ENCODE measurements at regions of chr11 and their contacts with region 1.

Region 1: GRCh38 chr11:96342961-96343711 is at the start of gene MAML2:
- DNase-seq: peak; percentile 94
- H3K4me3 ChIP-seq: peak within 1 kb of the TSS; percentile 84 to 90
- H3K27ac ChIP-seq: peak within 1 kb of the TSS; percentile 82 to 91
- H3K4me1 ChIP-seq: peaks cover 15 to 28% of the 10 kb centered on the region in 2 experiments; a peak in 2 of 4 replicates
- H3K27me3 ChIP-seq: no peaks in the 10 kb centered on the region
- CTCF ChIP-seq: peak; percentile 73
- EP300 ChIP-seq: no peak
- RAD21 ChIP-seq: peak; percentile 91
- polyA plus RNA-seq, gene MAML2: 20.1 and 24.5 TPM in 2 replicates

Region 2: GRCh38 chr11:95835768-95836488 is 507.2 kb before region 1 on chr11:
- CTCF ChIA-PET with region 1: interaction called, 28 read pairs
- POLR2A ChIA-PET with region 1: no interaction called
- DNase-seq: peak; percentile 55
- H3K4me3 ChIP-seq: no peak overlapping the region
- H3K27ac ChIP-seq: peak overlapping the region; percentile 43 to 61
- H3K4me1 ChIP-seq: peaks cover 2 to 4% of the 10 kb centered on the region in 2 experiments; a peak in 2 of 4 replicates
- H3K27me3 ChIP-seq: no peaks in the 10 kb centered on the region
- CTCF ChIP-seq: peak; percentile 95
- EP300 ChIP-seq: no peak
- RAD21 ChIP-seq: peak; percentile 89

Region 3: DNA sequence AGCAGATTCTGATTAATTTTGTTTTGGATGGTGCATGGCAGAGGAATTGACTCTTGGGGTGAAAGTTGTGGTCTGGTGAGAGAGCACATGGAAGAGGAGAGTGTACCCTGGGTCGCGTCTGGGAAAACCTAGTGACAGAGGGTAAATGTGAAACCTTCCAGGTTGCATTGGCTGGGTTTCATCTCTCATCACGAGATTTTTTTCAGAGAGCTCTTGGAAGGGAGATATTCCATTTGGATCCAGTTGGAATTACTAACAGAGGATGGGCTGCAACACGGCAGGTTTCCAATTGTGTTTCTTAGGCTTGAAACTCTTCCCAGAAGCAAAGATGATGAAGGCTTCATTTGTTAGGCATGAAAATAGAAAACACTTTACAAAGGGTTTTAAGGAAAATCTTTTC is 309.5 kb before region 1 on chr11:
- CTCF ChIA-PET with region 1: interaction called, 10 read pairs
- POLR2A ChIA-PET with region 1: no interaction called
- DNase-seq: no peak
- H3K4me3 ChIP-seq: no peak overlapping the region
- H3K27ac ChIP-seq: no peak overlapping the region
- H3K4me1 ChIP-seq: no peaks in the 10 kb centered on the region
- H3K27me3 ChIP-seq: no peaks in the 10 kb centered on the region
- CTCF ChIP-seq: no peak
- EP300 ChIP-seq: no peak
- RAD21 ChIP-seq: no peak

Region 4: DNA sequence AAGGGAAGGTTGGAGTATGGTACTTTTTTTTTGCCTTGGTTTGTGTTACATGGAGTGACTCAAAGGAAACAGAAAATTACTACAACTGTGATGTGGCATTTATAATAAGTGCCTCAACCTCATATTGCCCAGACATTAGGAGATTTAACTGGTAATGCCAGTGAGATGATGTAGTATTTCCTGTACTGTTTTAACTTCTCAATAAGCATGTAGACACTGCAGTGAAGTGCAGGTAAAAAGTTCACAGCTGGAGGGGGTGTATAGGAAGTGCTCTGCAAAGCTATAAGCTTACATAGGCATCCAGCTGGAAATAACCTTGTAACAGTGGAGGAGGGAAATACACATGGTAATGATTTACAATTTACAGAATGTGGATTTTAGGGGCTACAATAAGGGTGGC is 281.0 kb before region 1 on chr11:
- CTCF ChIA-PET with region 1: interaction called, 27 read pairs
- POLR2A ChIA-PET with region 1: no interaction called
- DNase-seq: no peak
- H3K4me3 ChIP-seq: no peak overlapping the region
- H3K27ac ChIP-seq: peak overlapping the region; percentile 90
- H3K4me1 ChIP-seq: peaks cover 12 to 59% of the 10 kb centered on the region in 2 experiments
- H3K27me3 ChIP-seq: no peaks in the 10 kb centered on the region
- CTCF ChIP-seq: no peak
- EP300 ChIP-seq: peak; percentile 24 to 80; a peak in 1 of 4 replicates
- RAD21 ChIP-seq: no peak

Region 5: DNA sequence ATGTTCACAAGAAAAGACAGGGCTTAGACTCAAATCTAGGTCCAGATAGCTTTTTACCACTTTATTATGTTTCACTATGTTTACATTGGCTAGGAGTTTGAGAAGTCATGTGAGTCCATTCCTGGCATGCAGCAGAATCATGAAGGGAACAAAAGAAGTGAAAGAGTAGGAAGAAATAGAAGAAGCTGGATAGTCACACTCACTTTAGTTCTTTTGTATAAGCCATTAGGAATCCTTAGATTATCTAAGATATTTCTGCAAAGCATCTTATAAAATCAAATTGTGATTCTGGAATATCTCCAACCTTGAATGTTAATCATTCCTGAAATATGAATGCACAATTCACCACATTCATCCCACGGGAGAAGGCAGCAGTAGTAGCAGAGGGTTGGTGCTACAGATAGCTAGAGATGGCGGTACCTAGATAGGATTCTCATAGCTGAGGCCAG is 32.0 kb before region 1 on chr11:
- CTCF ChIA-PET with region 1: interaction called, 14 read pairs
- POLR2A ChIA-PET with region 1: no interaction called
- DNase-seq: no peak
- H3K4me3 ChIP-seq: peak overlapping the region in 1 of 2 experiments; percentile 18; a peak in 1 of 4 replicates
- H3K27ac ChIP-seq: peak overlapping the region; percentile 78 to 100
- H3K4me1 ChIP-seq: peaks cover 15 to 77% of the 10 kb centered on the region in 2 experiments
- H3K27me3 ChIP-seq: no peaks in the 10 kb centered on the region
- CTCF ChIP-seq: no peak
- EP300 ChIP-seq: peak; percentile 10 to 58; a peak in 2 of 4 replicates
- RAD21 ChIP-seq: no peak

Region 6: DNA sequence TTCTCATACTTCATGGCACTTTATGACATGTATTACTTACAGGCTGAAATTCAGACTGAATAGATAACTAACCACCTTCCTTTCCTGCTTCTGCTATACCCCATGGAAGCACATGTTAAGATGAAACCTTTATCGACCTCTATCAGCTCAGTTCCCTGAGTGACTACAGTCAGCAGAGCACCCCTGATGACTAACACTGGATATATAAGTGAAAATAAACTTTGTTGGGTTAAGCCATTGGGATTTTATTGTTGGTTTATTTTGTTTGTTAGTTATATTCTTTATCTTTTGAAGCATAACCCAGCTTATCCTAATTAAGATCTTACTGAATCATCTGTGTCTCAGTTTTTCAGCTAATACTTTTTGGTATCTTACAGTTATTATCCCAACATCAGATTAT is 22.9 kb after region 1 on chr11:
- CTCF ChIA-PET with region 1: interaction called, 19 read pairs
- POLR2A ChIA-PET with region 1: no interaction called
- DNase-seq: no peak
- H3K4me3 ChIP-seq: no peak overlapping the region
- H3K27ac ChIP-seq: no peak overlapping the region
- H3K4me1 ChIP-seq: no peaks in the 10 kb centered on the region
- H3K27me3 ChIP-seq: no peaks in the 10 kb centered on the region
- CTCF ChIP-seq: no peak
- EP300 ChIP-seq: no peak
- RAD21 ChIP-seq: no peak

Region 7: DNA sequence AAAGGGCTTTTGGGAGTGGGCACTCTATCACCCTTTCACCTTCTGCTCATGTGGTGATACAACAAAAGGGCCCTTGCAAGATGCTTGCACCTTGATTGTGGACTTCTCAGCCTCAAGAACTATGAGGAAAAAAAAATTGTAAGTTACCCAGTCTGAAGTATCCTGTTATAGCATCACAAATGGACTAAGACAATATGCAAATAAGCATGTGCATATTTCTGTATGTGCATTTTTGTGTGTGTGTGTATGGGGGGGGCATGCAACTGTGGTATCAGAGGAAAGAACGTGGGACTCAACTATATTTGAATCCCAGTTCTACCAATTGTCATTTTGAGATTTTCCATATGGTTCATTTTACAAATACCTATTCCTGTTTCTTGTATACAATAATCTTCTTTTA is 57.6 kb after region 1 on chr11:
- CTCF ChIA-PET with region 1: no interaction called
- POLR2A ChIA-PET with region 1: no interaction called
- DNase-seq: no peak
- H3K4me3 ChIP-seq: no peak overlapping the region
- H3K27ac ChIP-seq: no peak overlapping the region
- H3K4me1 ChIP-seq: peaks cover 0 to 5% of the 10 kb centered on the region in 2 experiments; a peak in 2 of 4 replicates
- H3K27me3 ChIP-seq: no peaks in the 10 kb centered on the region
- CTCF ChIP-seq: no peak
- EP300 ChIP-seq: no peak
- RAD21 ChIP-seq: no peak

Measured in SK-N-SH (cell line).